ENCODE measurements at regions of chr2 and their contacts with region 1.

Region 1: DNA sequence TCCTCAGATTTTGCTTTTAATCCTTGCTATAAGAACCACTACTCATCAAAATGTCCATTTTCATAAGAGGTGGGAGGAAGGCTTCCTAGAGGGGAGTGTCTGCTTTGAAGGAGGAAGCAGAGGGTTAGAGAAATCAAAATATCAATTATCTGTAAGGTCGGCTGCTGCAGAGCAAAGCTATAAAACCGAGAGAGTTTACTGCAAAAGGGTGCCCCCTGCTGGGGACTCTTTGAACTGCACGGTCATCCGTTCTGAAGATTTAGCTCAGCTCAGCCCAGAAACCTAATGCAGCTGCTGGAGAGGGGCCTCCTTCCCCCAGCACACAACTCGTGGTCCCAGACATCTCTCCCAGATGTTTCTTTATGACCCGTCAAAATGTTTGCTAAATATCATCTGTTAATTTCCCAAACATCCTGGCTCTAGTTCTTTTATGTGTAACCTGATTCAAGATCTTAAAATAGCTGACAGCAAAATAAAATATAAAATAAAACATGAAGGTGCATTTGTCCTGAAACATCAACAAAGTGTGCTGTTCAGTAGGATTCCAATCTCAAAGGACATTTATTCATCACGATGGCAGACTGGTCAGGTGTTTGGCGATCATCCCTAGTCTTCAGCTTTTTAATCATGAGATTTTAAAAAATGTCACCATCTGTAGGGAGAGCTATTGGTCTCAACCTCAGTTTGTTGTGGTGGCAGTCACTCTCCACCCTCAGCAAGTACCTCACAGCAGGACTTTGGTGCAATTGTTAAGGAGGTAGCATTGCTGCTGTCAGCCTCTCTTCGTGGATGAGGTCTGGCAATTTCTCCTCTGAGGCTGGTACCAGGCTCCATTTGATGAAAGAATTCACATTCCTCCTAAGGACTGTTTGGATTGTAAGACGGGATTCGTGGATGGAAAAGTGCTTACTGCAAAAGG is 185.9 kb downstream of the MTX2 start:
- DNase-seq: peak; percentile 64
- H3K4me3 ChIP-seq: no peak overlapping the region; a peak in 1 of 4 replicates
- H3K27ac ChIP-seq: peak overlapping the region in 1 of 2 experiments; percentile 78; a peak in 2 of 4 replicates
- H3K4me1 ChIP-seq: peaks cover 0 to 16% of the 10 kb centered on the region in 2 experiments; a peak in 2 of 4 replicates
- H3K27me3 ChIP-seq: no peaks in the 10 kb centered on the region
- CTCF ChIP-seq: peak; percentile 94
- EP300 ChIP-seq: no peak
- RAD21 ChIP-seq: peak; percentile 88

Region 2: DNA sequence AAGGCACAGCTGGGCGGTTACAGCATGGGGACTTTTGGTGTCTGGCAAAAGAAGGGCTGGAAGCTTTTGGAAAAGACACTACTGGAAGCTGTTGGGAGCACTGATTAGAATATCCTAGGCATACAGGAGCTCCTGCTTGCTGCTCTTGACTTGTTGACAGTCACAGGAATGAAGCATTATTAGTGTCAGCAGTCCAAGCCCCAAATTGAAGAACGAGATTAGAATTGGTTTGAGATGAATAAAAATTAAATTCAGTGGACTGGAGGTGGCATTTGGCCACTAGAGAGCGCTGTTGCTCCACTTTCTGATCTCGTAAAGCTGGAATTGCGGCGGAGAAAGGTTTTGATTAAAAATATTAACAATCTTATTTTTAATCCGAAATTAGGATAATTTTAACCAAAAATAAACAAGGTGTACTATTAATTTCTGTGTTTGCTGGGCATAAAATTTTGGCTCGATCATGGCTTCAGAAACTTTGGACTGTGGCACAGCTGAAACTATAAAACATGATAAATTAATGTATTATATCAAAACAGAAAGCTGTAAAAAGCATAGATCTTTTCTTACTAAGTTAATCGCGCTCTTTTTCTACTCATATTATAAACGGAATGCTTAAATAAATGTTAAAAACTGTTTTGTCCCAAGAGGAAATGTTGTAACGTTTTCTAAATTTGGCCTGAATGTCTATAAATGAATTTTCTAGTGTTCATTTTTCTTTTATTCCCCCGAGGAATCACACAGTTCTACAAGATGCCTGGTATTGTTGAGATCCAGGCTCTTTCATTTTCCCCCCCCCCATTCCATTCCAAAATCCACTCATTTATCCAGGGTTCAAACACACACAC is 328.0 kb before region 1 on chr2:
- CTCF ChIA-PET with region 1: interaction called, 30 read pairs
- POLR2A ChIA-PET with region 1: interaction called, 14 read pairs
- DNase-seq: peak; percentile 63
- H3K4me3 ChIP-seq: peak overlapping the region; percentile 19 to 25; a peak in 1 of 4 replicates
- H3K27ac ChIP-seq: no peak overlapping the region; a peak in 1 of 4 replicates
- H3K4me1 ChIP-seq: peaks cover 4 to 20% of the 10 kb centered on the region in 2 experiments; a peak in 3 of 4 replicates
- H3K27me3 ChIP-seq: no peaks in the 10 kb centered on the region; the same call in 1 of the 2 replicates
- CTCF ChIP-seq: peak; percentile 97
- EP300 ChIP-seq: no peak; a peak in 1 of 4 replicates
- RAD21 ChIP-seq: peak; percentile 94

Region 3: GRCh38 chr2:176174824-176175708 is 280.1 kb before region 1 on chr2:
- CTCF ChIA-PET with region 1: interaction called, 19 read pairs
- POLR2A ChIA-PET with region 1: no interaction called
- DNase-seq: no peak
- H3K4me3 ChIP-seq: no peak overlapping the region
- H3K27ac ChIP-seq: no peak overlapping the region
- H3K4me1 ChIP-seq: peaks cover 0 to 8% of the 10 kb centered on the region in 2 experiments; a peak in 2 of 4 replicates
- H3K27me3 ChIP-seq: no peaks in the 10 kb centered on the region
- CTCF ChIP-seq: no peak
- EP300 ChIP-seq: no peak
- RAD21 ChIP-seq: no peak

Region 4: DNA sequence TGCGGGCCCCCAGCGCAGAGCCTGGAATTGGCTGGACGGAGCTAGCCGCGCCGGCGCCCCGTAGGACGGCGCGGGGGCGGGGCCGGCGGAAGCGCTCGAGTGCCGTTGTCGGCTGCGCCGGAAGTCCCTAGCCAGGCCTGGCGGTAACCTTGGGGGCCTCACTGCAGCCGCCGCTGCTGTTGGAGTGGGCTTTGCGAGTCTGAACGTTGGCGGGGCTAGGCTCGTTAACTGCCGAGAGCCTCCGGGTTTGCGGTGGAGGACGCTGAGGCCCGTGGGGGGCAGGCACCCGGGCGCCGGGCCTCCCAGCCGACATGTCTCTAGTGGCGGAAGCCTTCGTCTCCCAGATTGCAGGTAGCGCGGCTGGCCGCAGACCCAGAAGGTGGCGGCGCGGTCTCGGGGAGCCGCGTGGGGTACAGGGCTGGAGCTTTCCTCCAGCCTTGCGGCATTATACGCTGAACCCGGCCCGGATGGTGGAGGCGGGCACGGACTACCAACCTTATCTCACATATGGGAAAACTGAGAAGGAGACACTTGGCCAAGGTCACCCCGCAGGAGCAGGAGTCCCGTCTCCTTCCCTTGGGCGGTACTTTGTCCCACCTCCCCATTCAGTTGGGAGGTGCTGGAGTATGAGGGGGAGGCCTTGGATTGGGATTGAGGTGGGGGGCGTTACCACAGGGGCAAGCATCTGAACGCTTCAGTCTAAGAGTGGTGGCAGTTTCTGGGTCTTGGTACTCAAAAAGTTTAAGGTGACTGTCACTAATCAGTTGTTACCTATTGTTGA is 185.6 kb before region 1 on chr2 and contains the start of gene MTX2:
- CTCF ChIA-PET with region 1: interaction called, 11 read pairs
- POLR2A ChIA-PET with region 1: interaction called, 4 read pairs
- DNase-seq: peak; percentile 91
- H3K4me3 ChIP-seq: peak within 1 kb of the TSS; percentile 81 to 82
- H3K27ac ChIP-seq: peak within 1 kb of the TSS; percentile 82 to 96
- H3K4me1 ChIP-seq: peaks cover 0 to 7% of the 10 kb centered on the region in 2 experiments; a peak in 2 of 4 replicates
- H3K27me3 ChIP-seq: no peaks in the 10 kb centered on the region
- CTCF ChIP-seq: peak; percentile 29
- EP300 ChIP-seq: 0 out of 4 replicates have a peak, but pooled peaks of 1 of the 2 experiments have one; percentile 19
- RAD21 ChIP-seq: no peak; the same call in 1 of the 2 replicates
- polyA plus RNA-seq, gene MTX2: 44.4 and 61.9 TPM in 2 replicates

Region 5: DNA sequence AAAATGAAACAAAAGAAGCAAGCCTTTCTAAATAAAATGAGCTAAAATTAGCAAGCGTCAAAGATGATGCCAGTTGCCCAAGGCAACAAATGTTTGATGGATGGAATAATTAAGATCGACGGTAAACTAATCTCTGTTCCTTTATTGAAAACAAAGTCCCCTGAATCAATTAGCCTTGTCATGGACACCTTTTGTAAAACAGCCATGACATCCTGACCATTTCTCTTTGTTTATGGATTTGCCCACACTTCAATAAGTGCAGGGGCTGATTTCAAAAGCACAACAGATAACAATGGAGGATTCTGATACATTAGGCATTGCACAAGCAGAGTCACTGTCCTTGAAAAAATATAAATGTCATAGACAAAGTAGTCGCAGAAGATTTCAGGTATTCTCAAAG is 597.3 kb after region 1 on chr2:
- CTCF ChIA-PET with region 1: no interaction called
- POLR2A ChIA-PET with region 1: no interaction called
- DNase-seq: no peak
- H3K4me3 ChIP-seq: no peak overlapping the region
- H3K27ac ChIP-seq: no peak overlapping the region
- H3K4me1 ChIP-seq: peaks cover 0 to 7% of the 10 kb centered on the region in 2 experiments; a peak in 2 of 4 replicates
- H3K27me3 ChIP-seq: no peaks in the 10 kb centered on the region
- CTCF ChIP-seq: no peak
- EP300 ChIP-seq: no peak
- RAD21 ChIP-seq: no peak